Heart right ventricle (tissue), 16 donors: ENCODE measurements at regions of chr22 and their contacts with region 1.

Region 1: GRCh38 chr22:46563381-46564083 is 26.1 kb upstream of the CELSR1 start:
- DNase-seq: peak; percentile 83 to 87
- ATAC-seq: peak; percentile 85 to 95 (median 91)
- H3K4me3 ChIP-seq: no peak overlapping the region
- H3K27ac ChIP-seq: peak overlapping the region in 9 of 10 donors; percentile 8 to 64 (median 47)
- H3K4me1 ChIP-seq: peaks cover 10 to 17% (median 13%) of the 10 kb centered on the region in 9 donors
- H3K27me3 ChIP-seq: no peaks in the 10 kb centered on the region
- CTCF ChIP-seq: peak; percentile 75 to 89 (median 80)

Region 2: GRCh38 chr22:46661221-46661851 is 97.8 kb after region 1 on chr22:
- intact Hi-C with region 1: loop called in 1 of 10 experiments (anchors 10 kb)
- DNase-seq: no peak
- ATAC-seq: peak in 6 of 8 donors; percentile 15 to 69 (median 28)
- H3K4me3 ChIP-seq: no peak overlapping the region
- H3K27ac ChIP-seq: peak overlapping the region in 9 of 10 donors; percentile 6 to 76 (median 34)
- H3K4me1 ChIP-seq: peaks cover 5 to 36% (median 17%) of the 10 kb centered on the region in 9 donors
- H3K27me3 ChIP-seq: no peaks in the 10 kb centered on the region
- CTCF ChIP-seq: no peak

Region 3: GRCh38 chr22:46681010-46681409 is 117.5 kb after region 1 on chr22:
- intact Hi-C with region 1: loop called in 3 of 10 experiments (anchors 5 to 10 kb)
- DNase-seq: no peak
- ATAC-seq: no peak
- H3K4me3 ChIP-seq: no peak overlapping the region
- H3K27ac ChIP-seq: no peak overlapping the region
- H3K4me1 ChIP-seq: peaks cover 9 to 70% (median 47%) of the 10 kb centered on the region in 9 donors
- H3K27me3 ChIP-seq: no peaks in the 10 kb centered on the region
- CTCF ChIP-seq: peak in 7 of 9 donors; percentile 17 to 45 (median 24)

Region 4: GRCh38 chr22:46737976-46738646 is 174.6 kb after region 1 on chr22 and contains the start of gene CERK:
- intact Hi-C with region 1: loop called in 2 of 10 experiments (anchors 5 to 10 kb)
- DNase-seq: peak; percentile 81 to 91
- ATAC-seq: peak; percentile 69 to 89 (median 74)
- H3K4me3 ChIP-seq: peak within 1 kb of the TSS; percentile 57 to 99 (median 92)
- H3K27ac ChIP-seq: peak within 1 kb of the TSS; percentile 96 to 99 (median 98)
- H3K4me1 ChIP-seq: peaks cover 28 to 83% (median 70%) of the 10 kb centered on the region in 9 donors
- H3K27me3 ChIP-seq: no peaks in the 10 kb centered on the region
- CTCF ChIP-seq: no peak
- total RNA-seq, gene CERK: 50.9 to 97.0 (median 74.2) TPM